Transverse colon (tissue), 4 donors: ENCODE measurements at regions of chr3 and their contacts with region 1.

Region 1: DNA sequence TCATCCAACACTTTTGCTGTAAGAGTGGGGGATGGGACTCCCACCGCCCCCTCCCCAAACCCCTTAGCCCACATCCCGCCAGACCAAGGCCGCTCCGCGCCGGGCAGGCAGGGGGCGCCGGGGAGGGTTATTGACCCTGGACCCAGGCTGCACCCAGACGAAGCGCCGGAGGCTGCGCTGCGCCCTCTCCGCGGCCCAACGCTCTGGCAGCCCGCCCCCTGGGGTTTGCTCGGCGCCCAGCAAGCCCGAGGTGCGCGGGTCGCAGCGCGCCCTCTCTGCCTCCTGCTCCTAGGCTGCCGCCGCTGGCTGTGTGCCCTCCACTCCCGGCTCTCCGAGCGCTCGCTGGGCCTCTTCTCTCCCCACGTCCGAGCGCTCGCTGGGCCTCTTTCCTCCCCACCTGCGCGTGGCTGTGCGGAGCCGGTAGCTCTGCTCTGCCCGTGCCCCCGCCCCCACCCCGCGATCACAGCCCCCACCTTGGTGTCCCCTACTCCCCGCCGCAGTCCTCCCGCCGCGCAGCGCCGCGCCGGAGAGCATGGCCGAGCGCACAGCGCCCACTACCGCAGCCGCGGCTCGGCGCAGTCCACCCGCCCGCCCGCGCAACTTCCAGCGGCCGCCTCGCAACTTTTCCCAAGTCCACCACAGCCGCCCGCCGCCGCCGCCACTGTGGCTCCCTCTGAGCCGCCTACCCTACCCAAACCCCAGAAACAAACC is 1.2 kb downstream of the MECOM start:
- DNase-seq: peak; percentile 80
- H3K4me3 ChIP-seq: peak overlapping the region; percentile 18 to 66 (median 60)
- H3K27ac ChIP-seq: peak overlapping the region; percentile 76 to 89 (median 86)
- H3K4me1 ChIP-seq: peaks cover 4 to 44% (median 32%) of the 10 kb centered on the region in 4 donors
- H3K27me3 ChIP-seq: peaks cover 98% of the 10 kb centered on the region
- CTCF ChIP-seq: peak; percentile 43 to 85 (median 51)
- EP300 ChIP-seq: no peak
- POLR2A ChIP-seq: peak; percentile 23

Region 2: GRCh38 chr3:169149349-169149890 is 512.9 kb before region 1 on chr3:
- in situ Hi-C with region 1: loop called in 3 of 4 experiments (anchors 10 to 25 kb)
- intact Hi-C with region 1: loop called (anchors 5 kb)
- DNase-seq: peak; percentile 90
- H3K4me3 ChIP-seq: peak overlapping the region in 3 of 4 donors; percentile 16 to 46 (median 17)
- H3K27ac ChIP-seq: peak overlapping the region; percentile 84 to 90 (median 88)
- H3K4me1 ChIP-seq: peaks cover 6 to 79% (median 36%) of the 10 kb centered on the region in 4 donors
- H3K27me3 ChIP-seq: peaks cover 53% of the 10 kb centered on the region
- CTCF ChIP-seq: peak; percentile 80 to 95 (median 83)
- EP300 ChIP-seq: no peak
- POLR2A ChIP-seq: peak; percentile 36

Region 3: DNA sequence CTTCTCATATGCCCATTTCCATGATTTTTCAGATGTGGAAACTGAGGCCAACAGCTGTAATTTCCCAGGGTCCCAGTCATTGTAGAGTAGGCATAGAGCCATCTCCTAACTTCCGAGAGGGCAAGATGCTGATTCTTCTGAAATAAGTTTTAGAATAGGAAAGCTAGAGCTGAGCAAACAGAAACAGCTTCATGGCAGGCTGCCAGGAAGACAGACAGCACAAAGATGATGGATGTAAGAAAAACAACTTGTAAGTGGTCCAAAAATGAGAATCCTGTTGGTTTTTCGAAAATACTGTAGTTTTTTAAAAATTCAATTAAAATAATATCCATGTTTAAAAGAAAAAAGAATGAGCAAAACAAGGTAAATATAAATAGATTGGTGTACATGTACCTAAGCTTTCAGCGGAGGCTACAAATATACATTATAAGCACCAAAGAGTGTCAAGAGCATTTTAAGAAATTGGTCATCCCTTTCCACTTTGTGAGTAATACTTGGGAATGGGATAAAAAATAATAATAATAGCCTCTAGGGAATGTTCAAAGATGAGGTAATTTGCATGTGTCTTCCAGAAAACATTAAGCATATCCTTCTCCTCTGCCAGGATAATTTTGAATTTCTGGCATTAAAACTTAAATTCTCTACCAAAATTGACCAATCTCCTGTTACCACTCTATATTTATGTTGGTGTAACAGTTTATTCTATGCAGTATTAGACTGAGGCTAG is 405.3 kb before region 1 on chr3:
- in situ Hi-C with region 1: no loop called
- intact Hi-C with region 1: no loop called
- DNase-seq: no peak
- H3K4me3 ChIP-seq: no peak overlapping the region
- H3K27ac ChIP-seq: no peak overlapping the region
- H3K4me1 ChIP-seq: peaks cover 0 to 20% (median 3%) of the 10 kb centered on the region in 4 donors
- H3K27me3 ChIP-seq: no peaks in the 10 kb centered on the region
- CTCF ChIP-seq: no peak
- EP300 ChIP-seq: no peak
- POLR2A ChIP-seq: no peak

Region 4: GRCh38 chr3:170726976-170727661 is 1064.8 kb after region 1 on chr3:
- in situ Hi-C with region 1: no loop called
- intact Hi-C with region 1: no loop called
- DNase-seq: no peak
- H3K4me3 ChIP-seq: no peak overlapping the region
- H3K27ac ChIP-seq: no peak overlapping the region
- H3K4me1 ChIP-seq: no peaks in the 10 kb centered on the region
- H3K27me3 ChIP-seq: peaks cover 4% of the 10 kb centered on the region
- CTCF ChIP-seq: no peak
- EP300 ChIP-seq: no peak
- POLR2A ChIP-seq: no peak